ENCODE measurements at regions of chr19 and their contacts with region 1.

Region 1: DNA sequence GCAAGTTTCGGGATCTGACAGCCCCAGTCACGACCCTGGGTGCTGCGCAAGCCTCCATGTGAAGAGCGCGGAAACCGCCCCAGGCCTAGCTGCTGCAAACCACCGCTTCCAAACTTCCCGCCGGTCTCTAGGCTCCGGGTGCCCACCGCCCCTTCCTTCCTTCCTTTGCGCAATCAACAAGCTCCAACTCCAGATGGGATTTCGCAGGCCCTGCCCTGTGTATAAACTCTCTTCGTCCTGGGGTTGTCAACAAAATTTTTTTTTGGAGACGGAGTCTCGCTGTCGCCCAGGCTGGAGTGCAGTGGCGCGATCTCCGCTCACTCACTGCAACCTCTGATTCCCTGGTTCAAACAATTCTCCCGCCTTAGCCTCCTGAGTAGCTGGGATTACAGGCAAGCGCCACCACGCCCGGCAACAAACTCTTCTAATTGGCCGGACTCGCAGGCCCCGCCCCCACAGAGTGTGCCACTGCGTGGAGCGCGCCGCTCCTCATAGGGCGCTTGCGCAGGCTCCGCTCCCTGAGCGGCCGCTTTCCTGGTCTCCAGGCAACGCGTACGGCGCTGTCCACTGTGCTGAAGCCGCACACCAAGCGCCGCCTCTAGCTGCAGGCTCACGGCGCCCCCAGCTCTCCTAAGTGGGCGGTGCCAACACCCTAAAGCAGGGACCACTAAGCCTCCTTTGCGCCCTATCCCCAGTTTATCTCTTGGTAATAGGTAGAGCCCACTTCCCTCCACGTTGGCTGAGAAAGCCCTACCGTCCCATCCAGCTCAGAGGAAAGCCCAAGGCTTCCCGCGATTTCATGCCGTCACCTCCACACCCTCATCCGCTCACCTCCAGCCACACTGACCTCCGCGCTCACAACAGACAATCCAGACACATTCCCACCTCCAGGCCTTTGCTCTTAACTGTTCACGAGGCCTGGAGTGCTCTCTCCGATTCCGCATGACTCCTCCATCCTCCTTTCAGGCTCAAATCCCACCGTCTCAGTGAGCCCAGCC is 5.5 kb upstream of the QTRT1 start:
- DNase-seq: peak; percentile 70 to 95 (median 84)
- ATAC-seq: peak; percentile 97
- H3K4me3 ChIP-seq: peak overlapping the region; percentile 41
- H3K4me3 Mint-ChIP-seq: peak overlapping the region; percentile 85
- H3K27ac ChIP-seq: no peak overlapping the region
- H3K27ac Mint-ChIP-seq: peak overlapping the region; percentile 31
- H3K4me1 ChIP-seq: peaks cover 17% of the 10 kb centered on the region
- H3K4me1 Mint-ChIP-seq: peaks cover 17% of the 10 kb centered on the region
- H3K27me3 ChIP-seq: peaks cover 0 to 7% of the 10 kb centered on the region in 2 experiments
- H3K27me3 Mint-ChIP-seq: peaks cover 18% of the 10 kb centered on the region
- CTCF ChIP-seq: no peak

Region 2: DNA sequence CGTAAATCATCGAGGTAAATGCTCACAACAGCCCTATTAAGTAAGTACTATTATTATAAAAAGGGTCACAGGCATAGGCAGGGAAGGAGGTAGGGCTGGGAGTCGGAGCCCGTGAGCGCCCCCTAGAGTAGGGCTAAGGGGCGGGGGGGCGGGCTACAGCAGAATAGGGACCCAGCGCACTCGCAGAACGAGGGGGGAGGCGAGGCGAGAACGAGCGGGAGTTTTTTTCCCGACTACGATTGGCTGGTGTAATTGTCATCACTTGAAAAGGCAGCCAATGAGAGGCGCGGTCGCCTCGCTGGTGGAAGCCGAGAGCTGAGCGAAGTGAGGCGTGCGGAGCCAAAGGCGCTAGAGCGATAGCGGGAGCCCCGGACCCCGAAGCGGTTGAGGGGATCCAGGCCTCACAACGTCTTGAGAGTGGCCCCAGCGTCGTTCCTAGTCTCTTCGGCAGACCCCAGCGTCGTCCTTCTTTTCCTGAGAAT is 216.8 kb before region 1 on chr19:
- CTCF ChIA-PET with region 1: no interaction called
- POLR2A ChIA-PET with region 1: no interaction called
- intact Hi-C with region 1: loop called (anchors 5 kb)
- DNase-seq: peak; percentile 79 to 96 (median 88)
- ATAC-seq: peak; percentile 99
- H3K4me3 ChIP-seq: peak overlapping the region; percentile 40
- H3K4me3 Mint-ChIP-seq: peak overlapping the region; percentile 83
- H3K27ac ChIP-seq: peak overlapping the region in 1 of 2 donors; percentile 21
- H3K27ac Mint-ChIP-seq: peak overlapping the region; percentile 89
- H3K4me1 ChIP-seq: peaks cover 17% of the 10 kb centered on the region
- H3K4me1 Mint-ChIP-seq: peaks cover 9% of the 10 kb centered on the region
- H3K27me3 ChIP-seq: no peaks in the 10 kb centered on the region
- H3K27me3 Mint-ChIP-seq: no peaks in the 10 kb centered on the region
- CTCF ChIP-seq: peak; percentile 93

Region 3: DNA sequence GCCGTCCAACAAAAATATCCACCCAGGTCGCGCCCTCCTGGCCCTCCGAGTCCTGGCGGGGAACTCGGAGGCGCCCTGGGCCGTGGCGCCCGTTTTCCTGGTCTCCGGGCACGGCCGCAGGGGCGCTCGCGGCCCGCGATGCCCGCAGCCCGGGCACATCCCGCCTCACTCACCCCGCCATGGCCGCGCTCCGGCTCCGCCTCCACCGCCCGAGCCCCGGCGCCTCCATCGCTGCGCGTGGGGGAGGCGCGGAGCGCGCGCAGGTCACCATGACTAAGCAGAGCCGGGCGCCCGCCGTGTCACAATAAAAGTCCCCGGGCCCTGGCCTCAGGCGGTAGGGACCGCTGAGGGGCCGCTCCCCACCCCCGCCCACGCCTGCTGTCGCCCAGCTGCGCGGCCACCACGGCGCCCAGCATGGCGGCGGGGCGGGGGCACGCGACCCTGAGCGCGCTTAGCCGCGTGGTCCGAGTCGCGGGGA is 193.1 kb before region 1 on chr19:
- CTCF ChIA-PET with region 1: no interaction called
- POLR2A ChIA-PET with region 1: no interaction called
- intact Hi-C with region 1: loop called in 1 of 2 experiments (anchors 5 kb)
- DNase-seq: peak; percentile 75 to 94 (median 86)
- ATAC-seq: peak; percentile 93
- H3K4me3 ChIP-seq: peak overlapping the region; percentile 84
- H3K4me3 Mint-ChIP-seq: peak overlapping the region; percentile 88
- H3K27ac ChIP-seq: peak overlapping the region; percentile 67
- H3K27ac Mint-ChIP-seq: peak overlapping the region; percentile 52
- H3K4me1 ChIP-seq: peaks cover 52% of the 10 kb centered on the region
- H3K4me1 Mint-ChIP-seq: peaks cover 30% of the 10 kb centered on the region
- H3K27me3 ChIP-seq: no peaks in the 10 kb centered on the region
- H3K27me3 Mint-ChIP-seq: no peaks in the 10 kb centered on the region
- CTCF ChIP-seq: no peak

Region 4: DNA sequence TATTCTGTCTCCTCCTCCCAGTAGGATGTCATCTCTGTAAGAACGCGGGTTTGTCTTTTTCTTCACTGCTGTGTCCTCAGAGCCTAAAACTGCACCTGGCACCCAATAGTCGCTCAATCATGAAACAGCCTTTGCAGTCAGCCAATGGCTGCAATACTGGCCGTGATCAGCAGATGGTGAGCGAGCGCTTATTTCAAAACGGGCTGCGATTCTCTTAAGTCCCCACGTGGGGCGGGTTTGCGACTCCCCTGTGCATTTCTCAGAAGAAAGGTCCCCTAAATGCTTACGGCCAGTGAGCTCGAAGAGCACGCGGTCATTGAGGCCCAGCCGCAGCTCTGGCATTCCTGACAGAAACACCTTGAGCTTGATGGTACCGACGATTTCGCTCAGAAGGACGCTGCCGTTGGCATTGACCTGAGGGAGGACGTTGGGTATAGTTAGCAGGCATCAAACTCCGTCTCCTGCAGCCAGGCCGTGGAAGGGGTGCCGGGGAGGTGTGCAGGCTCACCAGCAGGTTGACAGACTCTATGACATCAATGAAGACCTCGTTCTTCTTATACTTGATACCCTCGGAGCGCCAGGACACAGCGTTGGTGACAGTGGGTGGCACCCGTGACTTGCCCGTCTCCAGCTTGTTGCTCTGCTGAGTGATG is 114.6 kb before region 1 on chr19:
- CTCF ChIA-PET with region 1: interaction called, 50 read pairs
- POLR2A ChIA-PET with region 1: interaction called, 4 read pairs
- intact Hi-C with region 1: loop called (anchors 1 kb)
- DNase-seq: peak; percentile 81 to 95 (median 89)
- ATAC-seq: peak; percentile 97
- H3K4me3 ChIP-seq: no peak overlapping the region
- H3K4me3 Mint-ChIP-seq: no peak overlapping the region
- H3K27ac ChIP-seq: no peak overlapping the region
- H3K27ac Mint-ChIP-seq: no peak overlapping the region
- H3K4me1 ChIP-seq: peaks cover 18% of the 10 kb centered on the region
- H3K4me1 Mint-ChIP-seq: peaks cover 25% of the 10 kb centered on the region
- H3K27me3 ChIP-seq: no peaks in the 10 kb centered on the region
- H3K27me3 Mint-ChIP-seq: no peaks in the 10 kb centered on the region
- CTCF ChIP-seq: peak; percentile 99

Region 5: GRCh38 chr19:10644260-10645007 is 51.3 kb before region 1 on chr19:
- CTCF ChIA-PET with region 1: interaction called, 24 read pairs
- POLR2A ChIA-PET with region 1: interaction called, 6 read pairs
- intact Hi-C with region 1: no loop called
- DNase-seq: peak; percentile 79 to 91 (median 84)
- ATAC-seq: peak; percentile 97
- H3K4me3 ChIP-seq: no peak overlapping the region
- H3K4me3 Mint-ChIP-seq: peak overlapping the region; percentile 48
- H3K27ac ChIP-seq: peak overlapping the region; percentile 4 to 34
- H3K27ac Mint-ChIP-seq: peak overlapping the region; percentile 80
- H3K4me1 ChIP-seq: peaks cover 29% of the 10 kb centered on the region
- H3K4me1 Mint-ChIP-seq: peaks cover 31% of the 10 kb centered on the region
- H3K27me3 ChIP-seq: no peaks in the 10 kb centered on the region
- H3K27me3 Mint-ChIP-seq: no peaks in the 10 kb centered on the region
- CTCF ChIP-seq: peak; percentile 87

Region 6: GRCh38 chr19:10653715-10654492 is 41.8 kb before region 1 on chr19 and contains the start of gene ILF3:
- CTCF ChIA-PET with region 1: interaction called, 8 read pairs
- POLR2A ChIA-PET with region 1: interaction called, 6 read pairs
- intact Hi-C with region 1: loop called (anchors 2 to 5 kb)
- DNase-seq: peak; percentile 99 to 100 (median 100)
- ATAC-seq: peak; percentile 74
- H3K4me3 ChIP-seq: peak within 1 kb of the TSS; percentile 92
- H3K4me3 Mint-ChIP-seq: peak within 1 kb of the TSS; percentile 94
- H3K27ac ChIP-seq: peak within 1 kb of the TSS; percentile 99 to 100
- H3K27ac Mint-ChIP-seq: peak within 1 kb of the TSS; percentile 92
- H3K4me1 ChIP-seq: peaks cover 58% of the 10 kb centered on the region
- H3K4me1 Mint-ChIP-seq: peaks cover 52% of the 10 kb centered on the region
- H3K27me3 ChIP-seq: no peaks in the 10 kb centered on the region
- H3K27me3 Mint-ChIP-seq: peaks cover 4% of the 10 kb centered on the region
- CTCF ChIP-seq: no peak
- total RNA-seq, gene ILF3: 464 to 491 TPM

Region 7: DNA sequence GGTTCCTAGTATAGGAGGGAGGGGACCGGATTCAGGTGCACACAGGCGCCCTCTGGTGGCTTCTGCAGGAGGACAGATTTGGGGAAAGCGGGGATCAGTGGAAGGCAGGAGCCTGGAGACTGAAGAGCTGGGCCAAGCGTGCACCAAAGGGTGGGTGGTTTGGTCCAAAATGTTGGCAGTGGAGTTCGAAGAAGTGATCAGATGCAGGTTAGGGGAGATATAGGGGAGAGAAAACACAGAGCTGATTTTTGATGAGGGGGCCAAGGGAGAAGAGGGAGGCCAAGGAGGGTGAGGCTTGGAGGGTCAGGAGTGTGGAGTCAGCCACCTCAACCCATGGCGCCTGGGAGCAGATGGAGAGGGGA is 168.8 kb after region 1 on chr19:
- CTCF ChIA-PET with region 1: interaction called, 3 read pairs
- POLR2A ChIA-PET with region 1: no interaction called
- intact Hi-C with region 1: loop called in 1 of 2 experiments (anchors 5 kb)
- DNase-seq: peak; percentile 70 to 91 (median 77)
- ATAC-seq: peak; percentile 97
- H3K4me3 ChIP-seq: no peak overlapping the region
- H3K4me3 Mint-ChIP-seq: no peak overlapping the region
- H3K27ac ChIP-seq: no peak overlapping the region
- H3K27ac Mint-ChIP-seq: peak overlapping the region; percentile 0
- H3K4me1 ChIP-seq: peaks cover 11% of the 10 kb centered on the region
- H3K4me1 Mint-ChIP-seq: peaks cover 7% of the 10 kb centered on the region
- H3K27me3 ChIP-seq: no peaks in the 10 kb centered on the region
- H3K27me3 Mint-ChIP-seq: no peaks in the 10 kb centered on the region
- CTCF ChIP-seq: peak; percentile 96

Region 8: GRCh38 chr19:10960314-10961072 is 264.8 kb after region 1 on chr19 and contains the start of gene SMARCA4:
- CTCF ChIA-PET with region 1: no interaction called
- POLR2A ChIA-PET with region 1: no interaction called
- intact Hi-C with region 1: no loop called
- DNase-seq: peak; percentile 93 to 100 (median 98)
- ATAC-seq: peak; percentile 75
- H3K4me3 ChIP-seq: peak within 1 kb of the TSS; percentile 91
- H3K4me3 Mint-ChIP-seq: peak within 1 kb of the TSS; percentile 94
- H3K27ac ChIP-seq: peak within 1 kb of the TSS; percentile 91 to 92
- H3K27ac Mint-ChIP-seq: peak within 1 kb of the TSS; percentile 89
- H3K4me1 ChIP-seq: peaks cover 46% of the 10 kb centered on the region
- H3K4me1 Mint-ChIP-seq: peaks cover 39% of the 10 kb centered on the region
- H3K27me3 ChIP-seq: no peaks in the 10 kb centered on the region
- H3K27me3 Mint-ChIP-seq: no peaks in the 10 kb centered on the region
- CTCF ChIP-seq: no peak
- total RNA-seq, gene SMARCA4: 69.6 to 74.5 TPM

Region 9: GRCh38 chr19:10998045-10998533 is 302.4 kb after region 1 on chr19:
- CTCF ChIA-PET with region 1: no interaction called
- POLR2A ChIA-PET with region 1: no interaction called
- intact Hi-C with region 1: no loop called
- DNase-seq: no peak
- ATAC-seq: no peak
- H3K4me3 ChIP-seq: no peak overlapping the region
- H3K4me3 Mint-ChIP-seq: no peak overlapping the region
- H3K27ac ChIP-seq: no peak overlapping the region
- H3K27ac Mint-ChIP-seq: no peak overlapping the region
- H3K4me1 ChIP-seq: no peaks in the 10 kb centered on the region
- H3K4me1 Mint-ChIP-seq: no peaks in the 10 kb centered on the region
- H3K27me3 ChIP-seq: no peaks in the 10 kb centered on the region
- H3K27me3 Mint-ChIP-seq: no peaks in the 10 kb centered on the region
- CTCF ChIP-seq: no peak